Activated B cell treated with CpG ODN at 0.5 μM for 24 hours (primary cell): ENCODE measurements at regions of chr4 and their contacts with region 1.

Region 1: GRCh38 chr4:112284662-112285411 is 867 bp downstream of the TIFA start:
- DNase-seq: no peak
- ATAC-seq: peak; percentile 13
- H3K4me3 Mint-ChIP-seq: peak overlapping the region; percentile 98
- H3K27ac Mint-ChIP-seq: peak overlapping the region; percentile 98
- H3K4me1 Mint-ChIP-seq: peaks cover 88% of the 10 kb centered on the region
- H3K27me3 Mint-ChIP-seq: no peaks in the 10 kb centered on the region
- CTCF ChIP-seq: no peak

Region 2: DNA sequence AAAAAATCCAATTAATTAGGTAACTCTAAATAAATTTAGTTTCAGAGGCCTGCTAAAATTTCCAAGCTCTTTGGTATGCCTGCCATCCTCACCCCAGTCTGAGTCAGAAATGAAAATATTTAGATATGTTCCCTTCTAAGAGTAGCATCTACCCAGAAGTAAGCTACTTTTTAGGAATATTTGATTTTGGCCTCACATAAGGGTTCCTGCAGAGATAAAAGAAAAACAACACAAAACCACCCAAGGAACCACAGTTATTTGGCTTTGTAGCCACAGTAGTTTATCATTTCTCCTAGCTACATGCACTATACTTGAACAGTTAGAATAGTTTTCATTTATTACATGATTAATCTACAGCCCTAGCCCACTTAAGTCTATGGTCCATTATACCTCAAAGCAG is 332.1 kb before region 1 on chr4:
- CTCF ChIA-PET with region 1: no interaction called
- POLR2A ChIA-PET with region 1: no interaction called
- intact Hi-C with region 1: no loop called
- DNase-seq: no peak
- ATAC-seq: no peak
- H3K4me3 Mint-ChIP-seq: no peak overlapping the region
- H3K27ac Mint-ChIP-seq: no peak overlapping the region
- H3K4me1 Mint-ChIP-seq: no peaks in the 10 kb centered on the region
- H3K27me3 Mint-ChIP-seq: peaks cover 4% of the 10 kb centered on the region
- CTCF ChIP-seq: no peak

Region 3: GRCh38 chr4:112145326-112145819 is 139.5 kb before region 1 on chr4 and contains the start of gene FAM241A:
- CTCF ChIA-PET with region 1: no interaction called
- POLR2A ChIA-PET with region 1: no interaction called
- intact Hi-C with region 1: loop called (anchors 2 kb)
- DNase-seq: peak; percentile 86
- ATAC-seq: peak; percentile 97
- H3K4me3 Mint-ChIP-seq: peak within 1 kb of the TSS; percentile 97
- H3K27ac Mint-ChIP-seq: peak within 1 kb of the TSS; percentile 80
- H3K4me1 Mint-ChIP-seq: peaks cover 19% of the 10 kb centered on the region
- H3K27me3 Mint-ChIP-seq: peaks cover 5% of the 10 kb centered on the region
- CTCF ChIP-seq: no peak
- total RNA-seq, gene FAM241A: 1.1 and 1.5 TPM in 2 replicates

Region 4: DNA sequence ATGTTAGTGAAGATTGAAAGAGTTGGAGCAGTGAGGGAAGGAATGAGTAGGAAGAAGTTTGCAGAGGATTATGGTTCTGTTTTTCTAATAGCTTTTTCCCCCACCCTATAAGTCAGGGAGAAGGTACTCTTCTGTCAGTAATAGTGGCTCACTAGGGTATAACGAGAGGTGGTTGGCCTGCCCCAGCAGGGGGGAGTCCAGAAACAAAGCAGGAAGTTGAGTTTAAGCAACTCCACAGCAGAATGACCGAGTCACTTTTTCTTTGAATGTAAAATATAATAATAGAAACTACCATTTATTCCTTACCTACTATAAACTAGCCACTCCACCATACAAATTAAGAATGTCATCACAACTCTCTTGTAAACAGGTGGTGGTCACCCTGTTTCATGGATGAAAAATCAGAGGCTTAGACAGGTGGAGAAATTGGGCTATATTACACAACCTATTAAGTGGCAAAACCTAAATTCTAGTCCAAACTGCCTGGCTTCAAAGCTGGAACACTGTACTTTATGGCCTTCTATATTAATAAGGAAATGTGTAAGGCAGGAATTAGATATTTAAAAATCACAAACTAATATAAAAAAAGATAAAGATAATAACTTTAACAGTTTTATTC is 31.3 kb before region 1 on chr4:
- CTCF ChIA-PET with region 1: no interaction called
- POLR2A ChIA-PET with region 1: interaction called, 3 read pairs
- intact Hi-C with region 1: loop called (anchors 2 kb)
- DNase-seq: no peak
- ATAC-seq: peak; percentile 82
- H3K4me3 Mint-ChIP-seq: no peak overlapping the region
- H3K27ac Mint-ChIP-seq: no peak overlapping the region
- H3K4me1 Mint-ChIP-seq: peaks cover 5% of the 10 kb centered on the region
- H3K27me3 Mint-ChIP-seq: no peaks in the 10 kb centered on the region
- CTCF ChIP-seq: no peak

Region 5: GRCh38 chr4:112266821-112267220 is 18.0 kb before region 1 on chr4:
- CTCF ChIA-PET with region 1: interaction called, 7 read pairs
- POLR2A ChIA-PET with region 1: interaction called, 7 read pairs
- intact Hi-C with region 1: loop called (anchors 2 kb)
- DNase-seq: no peak
- ATAC-seq: no peak
- H3K4me3 Mint-ChIP-seq: no peak overlapping the region
- H3K27ac Mint-ChIP-seq: no peak overlapping the region
- H3K4me1 Mint-ChIP-seq: peaks cover 2% of the 10 kb centered on the region
- H3K27me3 Mint-ChIP-seq: no peaks in the 10 kb centered on the region
- CTCF ChIP-seq: no peak

Region 6: GRCh38 chr4:112296949-112297880 is 12.4 kb after region 1 on chr4 and contains the start of gene ALPK1:
- CTCF ChIA-PET with region 1: interaction called, 3 read pairs
- POLR2A ChIA-PET with region 1: interaction called, 59 read pairs
- intact Hi-C with region 1: loop called (anchors 1 kb)
- DNase-seq: no peak
- ATAC-seq: peak; percentile 94
- H3K4me3 Mint-ChIP-seq: peak within 1 kb of the TSS; percentile 85
- H3K27ac Mint-ChIP-seq: peak within 1 kb of the TSS; percentile 85
- H3K4me1 Mint-ChIP-seq: peaks cover 23% of the 10 kb centered on the region
- H3K27me3 Mint-ChIP-seq: no peaks in the 10 kb centered on the region
- CTCF ChIP-seq: no peak
- total RNA-seq, gene ALPK1: 23.1 and 26.7 TPM in 2 replicates

Region 7: GRCh38 chr4:112312610-112313239 is 27.9 kb after region 1 on chr4:
- CTCF ChIA-PET with region 1: interaction called, 4 read pairs
- POLR2A ChIA-PET with region 1: interaction called, 27 read pairs
- intact Hi-C with region 1: loop called (anchors 1 kb)
- DNase-seq: no peak
- ATAC-seq: peak; percentile 87
- H3K4me3 Mint-ChIP-seq: no peak overlapping the region
- H3K27ac Mint-ChIP-seq: no peak overlapping the region
- H3K4me1 Mint-ChIP-seq: peaks cover 19% of the 10 kb centered on the region
- H3K27me3 Mint-ChIP-seq: no peaks in the 10 kb centered on the region
- CTCF ChIP-seq: no peak

Region 8: DNA sequence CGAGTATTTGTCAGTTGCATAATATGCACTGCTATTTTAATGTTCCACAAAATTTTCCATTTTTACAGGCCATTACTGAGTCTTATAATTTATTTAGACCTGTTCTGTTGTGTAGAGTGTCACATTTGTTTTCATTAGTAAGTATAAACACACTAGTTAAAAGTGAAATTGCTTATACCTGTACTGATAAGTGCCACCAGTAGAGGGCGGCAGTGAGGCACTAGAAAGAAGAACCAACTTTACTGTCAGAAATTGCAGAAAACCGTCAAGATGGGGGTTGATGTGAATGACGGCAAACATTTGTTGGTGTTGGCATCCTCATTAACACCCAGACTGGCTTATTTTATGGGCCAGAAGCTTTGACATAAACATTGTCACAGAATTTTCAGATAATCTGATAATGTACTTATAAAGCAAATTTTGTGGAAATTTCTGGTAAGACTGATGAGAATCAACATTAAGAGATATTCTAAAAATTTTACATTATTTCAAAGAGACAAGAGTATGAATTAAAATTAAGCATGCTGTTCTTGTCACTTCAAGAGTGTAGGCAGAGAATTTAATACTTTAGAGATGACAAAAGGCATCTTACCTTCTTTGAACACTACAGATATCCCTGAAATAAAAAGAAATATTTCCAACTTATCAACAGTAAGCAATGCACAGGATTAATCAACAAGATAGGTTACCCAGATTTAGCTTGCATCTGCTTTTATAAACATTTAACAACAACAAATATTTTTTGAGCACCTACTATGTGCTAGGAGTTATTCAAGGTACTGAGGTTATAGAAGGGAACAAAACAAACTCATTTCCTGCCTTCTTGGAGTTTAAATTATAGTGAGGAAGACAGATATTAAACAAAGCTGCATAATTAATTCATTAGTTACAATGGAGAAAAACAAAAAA is 37.2 kb after region 1 on chr4:
- CTCF ChIA-PET with region 1: interaction called, 5 read pairs
- POLR2A ChIA-PET with region 1: interaction called, 7 read pairs
- intact Hi-C with region 1: loop called (anchors 1 kb)
- DNase-seq: peak; percentile 39
- ATAC-seq: peak; percentile 73
- H3K4me3 Mint-ChIP-seq: no peak overlapping the region
- H3K27ac Mint-ChIP-seq: no peak overlapping the region
- H3K4me1 Mint-ChIP-seq: peaks cover 15% of the 10 kb centered on the region
- H3K27me3 Mint-ChIP-seq: no peaks in the 10 kb centered on the region
- CTCF ChIP-seq: peak; percentile 97

Region 9: GRCh38 chr4:112616984-112617383 is 332.1 kb after region 1 on chr4:
- CTCF ChIA-PET with region 1: no interaction called
- POLR2A ChIA-PET with region 1: no interaction called
- intact Hi-C with region 1: no loop called
- DNase-seq: no peak
- ATAC-seq: no peak
- H3K4me3 Mint-ChIP-seq: no peak overlapping the region
- H3K27ac Mint-ChIP-seq: no peak overlapping the region
- H3K4me1 Mint-ChIP-seq: no peaks in the 10 kb centered on the region
- H3K27me3 Mint-ChIP-seq: no peaks in the 10 kb centered on the region
- CTCF ChIP-seq: no peak

Region 10: DNA sequence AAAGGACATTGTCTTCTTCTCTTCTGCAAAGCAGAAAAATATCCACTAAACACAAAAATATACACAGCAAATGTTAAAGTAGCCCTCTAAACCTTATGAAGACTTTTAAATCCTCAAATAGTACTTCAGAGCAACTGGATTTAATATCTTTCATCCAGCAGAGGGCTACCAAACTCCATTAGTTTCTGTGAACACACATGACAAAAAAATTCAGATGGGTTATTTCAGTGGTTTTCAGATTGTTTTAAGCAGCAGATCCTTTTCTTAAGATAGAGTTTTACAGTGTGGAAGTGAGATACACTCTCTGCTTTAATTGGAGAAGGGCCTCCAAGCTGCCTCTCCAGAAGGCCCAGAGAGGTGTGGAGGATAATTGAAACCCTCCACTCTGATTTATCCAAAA is 821.3 kb after region 1 on chr4:
- CTCF ChIA-PET with region 1: no interaction called
- POLR2A ChIA-PET with region 1: no interaction called
- intact Hi-C with region 1: no loop called
- DNase-seq: no peak
- ATAC-seq: no peak
- H3K4me3 Mint-ChIP-seq: no peak overlapping the region
- H3K27ac Mint-ChIP-seq: no peak overlapping the region
- H3K4me1 Mint-ChIP-seq: no peaks in the 10 kb centered on the region
- H3K27me3 Mint-ChIP-seq: no peaks in the 10 kb centered on the region
- CTCF ChIP-seq: no peak